Mammary epithelial cell (primary cell): ENCODE measurements at regions of chrX and their contacts with region 1.

Region 1: DNA sequence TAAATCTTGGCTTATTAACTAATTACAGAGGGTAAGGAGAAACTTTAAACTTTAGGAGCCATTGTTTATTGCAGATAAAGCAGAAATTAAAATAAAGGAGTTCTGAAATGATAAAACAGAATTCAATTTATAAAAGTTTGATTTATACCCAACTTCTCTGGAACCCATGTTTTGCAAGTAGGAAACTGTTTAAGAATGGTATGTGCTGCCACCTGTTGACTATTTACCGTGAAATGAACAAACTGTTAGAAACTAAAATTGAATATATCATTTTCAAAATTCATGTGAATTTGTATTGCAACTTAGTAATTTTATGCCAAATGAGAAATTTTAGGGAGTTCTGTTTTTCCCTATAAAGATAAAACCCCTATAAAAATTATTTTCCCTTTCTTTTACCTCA is 11.0 kb upstream of the TBC1D8B start:
- DNase-seq: no peak
- H3K4me3 ChIP-seq: no peak overlapping the region
- H3K27ac ChIP-seq: no peak overlapping the region
- H3K4me1 ChIP-seq: no peaks in the 10 kb centered on the region
- H3K27me3 ChIP-seq: no peaks in the 10 kb centered on the region
- CTCF ChIP-seq: peak; percentile 32 to 50

Region 2: GRCh38 chrX:106404512-106404911 is 387.0 kb before region 1 on chrX:
- CTCF ChIA-PET with region 1: no interaction called
- dilution Hi-C with region 1: no loop called
- in situ Hi-C with region 1: no loop called
- intact Hi-C with region 1: loop called (anchors 1 kb)
- DNase-seq: peak; percentile 37
- H3K4me3 ChIP-seq: no peak overlapping the region
- H3K27ac ChIP-seq: no peak overlapping the region
- H3K4me1 ChIP-seq: no peaks in the 10 kb centered on the region
- H3K27me3 ChIP-seq: peaks cover 4% of the 10 kb centered on the region
- CTCF ChIP-seq: peak; percentile 41 to 57

Region 3: GRCh38 chrX:106415276-106415895 is 376.1 kb before region 1 on chrX:
- CTCF ChIA-PET with region 1: no interaction called
- dilution Hi-C with region 1: no loop called
- in situ Hi-C with region 1: no loop called
- intact Hi-C with region 1: loop called (anchors 1 kb)
- DNase-seq: peak; percentile 6
- H3K4me3 ChIP-seq: no peak overlapping the region
- H3K27ac ChIP-seq: no peak overlapping the region
- H3K4me1 ChIP-seq: no peaks in the 10 kb centered on the region
- H3K27me3 ChIP-seq: peaks cover 11% of the 10 kb centered on the region
- CTCF ChIP-seq: peak; percentile 78

Region 4: DNA sequence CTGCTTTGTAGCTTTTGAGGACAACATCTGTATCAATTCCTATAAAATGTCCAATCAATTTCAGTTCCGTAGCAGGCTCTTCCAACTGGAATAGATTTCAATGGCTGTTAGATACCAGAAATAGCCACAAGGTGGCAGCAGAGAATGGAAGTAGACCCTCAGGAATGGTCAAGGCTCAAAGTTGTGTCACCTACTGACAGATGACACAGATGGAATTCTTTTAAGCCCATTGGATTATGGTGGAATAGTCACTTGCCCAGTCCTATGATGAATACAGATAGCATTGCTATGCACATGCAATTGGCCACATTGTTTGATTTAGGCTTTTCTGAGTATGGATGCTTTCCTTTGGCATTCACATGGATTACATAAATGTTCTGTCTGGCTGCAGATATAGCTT is 310.2 kb before region 1 on chrX:
- CTCF ChIA-PET with region 1: no interaction called
- dilution Hi-C with region 1: loop called (anchors 25 kb)
- in situ Hi-C with region 1: loop called (anchors 25 kb)
- intact Hi-C with region 1: loop called (anchors 1 kb)
- DNase-seq: peak; percentile 42
- H3K4me3 ChIP-seq: no peak overlapping the region
- H3K27ac ChIP-seq: no peak overlapping the region
- H3K4me1 ChIP-seq: no peaks in the 10 kb centered on the region
- H3K27me3 ChIP-seq: peaks cover 5% of the 10 kb centered on the region
- CTCF ChIP-seq: peak; percentile 79 to 81

Region 5: DNA sequence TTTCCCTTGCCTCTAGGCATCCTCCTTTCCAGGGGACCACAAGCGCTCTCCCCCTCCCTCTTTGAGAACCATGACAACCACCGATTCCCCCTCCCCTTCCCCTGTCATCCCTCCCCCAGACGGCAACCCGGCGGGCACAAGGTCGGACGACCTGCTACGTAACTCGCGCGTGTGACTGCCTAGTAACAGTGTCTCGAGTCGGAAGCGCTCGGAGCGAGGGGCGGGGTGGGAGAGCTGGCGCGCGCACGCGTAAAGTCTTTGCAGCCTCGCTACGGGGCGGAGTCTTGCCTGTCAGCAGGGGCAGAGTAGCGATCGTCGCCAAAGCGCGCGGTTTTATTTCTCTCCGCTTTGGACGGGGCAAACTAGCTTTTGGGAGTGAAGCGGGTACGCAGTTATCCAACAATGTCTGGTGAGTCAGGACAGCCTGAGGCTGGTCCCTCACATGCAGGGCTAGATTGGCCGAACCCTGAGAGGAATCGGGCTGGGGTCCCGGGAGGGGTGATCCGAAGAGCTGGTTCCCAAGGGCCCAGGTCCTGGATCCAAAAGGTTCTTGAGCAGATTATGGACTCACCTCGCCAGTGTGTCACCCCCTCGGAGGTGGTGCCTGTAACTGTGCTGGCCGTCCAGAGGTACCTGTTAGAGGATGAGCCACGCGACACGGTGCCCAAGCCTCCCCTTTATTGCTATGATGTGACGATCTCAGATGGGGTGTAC is 179.7 kb before region 1 on chrX and contains the start of gene RADX:
- CTCF ChIA-PET with region 1: no interaction called
- dilution Hi-C with region 1: no loop called
- in situ Hi-C with region 1: loop called in 1 of 2 experiments (anchors 25 kb)
- intact Hi-C with region 1: loop called (anchors 5 kb)
- DNase-seq: peak; percentile 68
- H3K4me3 ChIP-seq: peak within 1 kb of the TSS; percentile 36 to 58 (median 43)
- H3K27ac ChIP-seq: peak within 1 kb of the TSS; percentile 58
- H3K4me1 ChIP-seq: no peaks in the 10 kb centered on the region
- H3K27me3 ChIP-seq: no peaks in the 10 kb centered on the region
- CTCF ChIP-seq: no peak
- total RNA-seq, gene RADX: 3.9 to 5.2 TPM

Region 6: DNA sequence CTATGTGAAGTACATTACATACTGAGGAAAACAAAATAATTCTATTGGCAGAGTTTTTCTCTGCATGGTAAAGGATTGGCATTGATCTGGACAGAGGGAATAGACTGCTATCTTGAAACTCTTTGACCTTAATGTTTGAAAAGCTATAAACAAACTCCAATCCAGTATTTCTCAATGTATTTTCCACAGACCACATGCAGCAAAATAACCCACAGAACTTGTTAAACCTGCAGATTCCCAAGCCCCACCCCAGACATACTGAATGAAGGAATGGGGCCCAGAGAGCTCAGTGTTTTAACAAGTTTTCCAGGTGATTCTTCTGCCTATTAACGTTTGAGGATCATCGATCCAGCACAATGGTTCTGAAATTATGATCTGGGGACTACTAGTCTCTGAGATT is 49.3 kb before region 1 on chrX:
- CTCF ChIA-PET with region 1: no interaction called
- dilution Hi-C with region 1: no loop called
- in situ Hi-C with region 1: no loop called
- intact Hi-C with region 1: no loop called
- DNase-seq: peak; percentile 24
- H3K4me3 ChIP-seq: no peak overlapping the region
- H3K27ac ChIP-seq: no peak overlapping the region
- H3K4me1 ChIP-seq: peaks cover 3% of the 10 kb centered on the region
- H3K27me3 ChIP-seq: no peaks in the 10 kb centered on the region
- CTCF ChIP-seq: no peak